Gastrocnemius medialis (tissue), 4 donors: ENCODE measurements at regions of chr4 and their contacts with region 1.

Region 1: GRCh38 chr4:70839589-70840093 is at the start of gene GRSF1:
- DNase-seq: peak; percentile 94
- ATAC-seq: peak; percentile 89 to 91
- H3K4me3 ChIP-seq: peak within 1 kb of the TSS; percentile 68 to 96 (median 78)
- H3K27ac ChIP-seq: peak within 1 kb of the TSS; percentile 86 to 98 (median 92)
- H3K4me1 ChIP-seq: peaks cover 23 to 29% of the 10 kb centered on the region in 2 donors
- H3K27me3 ChIP-seq: no peaks in the 10 kb centered on the region
- CTCF ChIP-seq: peak in 2 of 5 experiments; percentile 8 to 11
- POLR2A ChIP-seq: peak; percentile 71 to 84
- total RNA-seq, gene GRSF1: 121 to 158 (median 140) TPM

Region 2: DNA sequence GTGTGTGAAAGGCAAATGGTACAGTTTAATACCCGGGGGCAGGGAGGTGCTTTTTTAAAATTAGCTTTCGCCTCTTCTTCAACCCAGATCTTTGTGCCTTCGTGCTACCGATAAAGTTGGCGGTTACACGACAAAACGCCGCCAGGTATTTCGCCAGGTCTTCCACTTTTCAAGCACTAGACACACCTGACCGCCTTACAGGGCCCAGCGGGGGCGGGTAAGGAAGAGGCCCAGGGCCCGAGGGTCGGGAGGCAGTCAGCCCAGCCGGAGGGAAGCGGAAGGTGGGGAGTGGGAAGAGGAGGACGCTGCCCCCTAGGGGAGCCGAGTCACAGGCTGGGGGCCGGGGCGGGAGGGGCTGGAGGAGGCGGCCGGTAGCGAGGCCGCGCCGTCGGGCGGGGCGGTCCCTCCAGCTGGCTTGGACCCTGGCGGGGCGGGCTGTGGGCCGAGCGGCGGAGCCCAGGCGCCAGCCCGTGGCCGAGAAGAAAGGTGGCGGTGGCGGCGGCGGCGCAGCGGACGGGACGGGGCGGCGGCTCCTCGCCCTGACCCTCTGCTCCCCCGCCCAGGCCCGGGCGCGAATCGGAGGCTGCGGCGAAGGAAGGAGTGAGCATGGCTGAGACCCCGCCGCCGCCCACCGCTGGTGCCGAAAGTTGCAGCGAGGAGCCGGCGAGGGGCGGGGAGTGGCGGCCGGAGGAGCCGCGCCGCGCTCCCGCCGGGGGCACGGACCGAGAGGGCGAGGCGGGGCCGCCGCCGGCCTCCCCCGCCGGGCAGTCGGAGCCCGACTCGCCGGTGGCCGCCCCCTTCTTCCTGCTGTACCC is 135.1 kb before region 1 on chr4:
- in situ Hi-C with region 1: no loop called
- intact Hi-C with region 1: loop called (anchors 5 kb)
- DNase-seq: peak; percentile 65 to 80
- ATAC-seq: peak; percentile 67 to 72
- H3K4me3 ChIP-seq: peak overlapping the region; percentile 72 to 94 (median 80)
- H3K27ac ChIP-seq: peak overlapping the region; percentile 93 to 98 (median 96)
- H3K4me1 ChIP-seq: peaks cover 16 to 24% of the 10 kb centered on the region in 2 donors
- H3K27me3 ChIP-seq: no peaks in the 10 kb centered on the region
- CTCF ChIP-seq: peak in 2 of 5 experiments; percentile 45 to 48
- POLR2A ChIP-seq: peak in 1 of 2 donors; percentile 48

Region 3: DNA sequence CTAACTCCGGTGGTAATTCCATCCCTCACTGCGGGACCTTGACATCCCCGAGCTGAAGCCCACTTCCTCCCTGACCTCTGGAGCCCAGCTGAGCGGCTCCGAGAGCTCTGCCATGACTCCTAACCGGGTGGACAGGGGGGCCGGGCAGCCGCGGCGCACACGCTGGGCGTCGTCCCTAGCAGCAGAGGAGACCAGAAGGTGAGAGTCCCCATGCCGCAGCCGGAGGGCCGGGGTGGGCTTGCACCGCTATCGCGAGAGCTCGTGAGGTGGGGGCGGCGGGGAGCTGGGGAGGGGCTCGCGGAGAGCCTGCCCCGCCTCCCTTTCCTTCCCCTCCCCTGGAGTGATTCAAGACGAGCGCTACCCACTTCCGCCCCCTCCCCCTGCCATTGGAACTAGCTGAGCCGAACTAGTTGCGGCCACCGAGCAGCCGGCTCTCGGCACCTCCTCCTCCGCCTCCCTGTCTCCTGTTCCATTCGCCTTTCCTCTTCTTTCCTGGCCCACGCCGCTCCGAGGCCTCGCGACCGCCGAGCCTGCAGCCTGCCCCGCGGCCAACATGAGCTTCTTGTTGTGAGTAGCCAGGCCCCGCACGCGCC is 62.4 kb after region 1 on chr4 and contains the start of gene MOB1B:
- in situ Hi-C with region 1: no loop called
- intact Hi-C with region 1: loop called (anchors 1 kb)
- DNase-seq: peak; percentile 74 to 77
- ATAC-seq: peak; percentile 96
- H3K4me3 ChIP-seq: peak within 1 kb of the TSS; percentile 73 to 96 (median 91)
- H3K27ac ChIP-seq: peak within 1 kb of the TSS; percentile 79 to 90 (median 87)
- H3K4me1 ChIP-seq: peaks cover 5 to 10% of the 10 kb centered on the region in 2 donors
- H3K27me3 ChIP-seq: no peaks in the 10 kb centered on the region
- CTCF ChIP-seq: peak in 4 of 5 experiments; percentile 15 to 58 (median 34)
- POLR2A ChIP-seq: peak; percentile 26 to 47
- total RNA-seq, gene MOB1B: 6.5 to 17.5 (median 8.4) TPM

Region 4: GRCh38 chr4:70915036-70915815 is 75.6 kb after region 1 on chr4:
- in situ Hi-C with region 1: no loop called
- intact Hi-C with region 1: no loop called
- DNase-seq: no peak
- ATAC-seq: no peak
- H3K4me3 ChIP-seq: no peak overlapping the region
- H3K27ac ChIP-seq: no peak overlapping the region
- H3K4me1 ChIP-seq: no peaks in the 10 kb centered on the region
- H3K27me3 ChIP-seq: no peaks in the 10 kb centered on the region
- CTCF ChIP-seq: no peak
- POLR2A ChIP-seq: no peak

Region 5: DNA sequence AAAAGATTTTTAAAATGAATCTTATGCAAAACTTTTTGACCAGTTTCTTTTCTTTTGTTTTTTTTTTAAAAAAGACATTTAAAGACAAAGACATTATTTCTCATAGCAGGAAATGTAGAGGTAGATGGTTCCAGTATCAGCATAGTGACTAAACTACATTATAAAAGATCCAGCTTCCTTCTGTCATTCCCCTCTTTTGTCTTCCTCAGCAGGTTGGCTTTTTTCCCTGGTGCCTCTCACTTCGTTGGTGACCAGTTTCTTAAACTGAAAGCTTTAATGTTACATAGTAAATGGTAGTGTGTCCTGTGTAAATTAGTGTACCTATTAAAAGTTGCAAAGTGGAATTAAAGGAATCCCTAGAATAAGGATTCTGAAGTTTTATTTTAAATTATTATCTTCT is 189.9 kb after region 1 on chr4:
- in situ Hi-C with region 1: no loop called
- intact Hi-C with region 1: no loop called
- DNase-seq: no peak
- ATAC-seq: no peak
- H3K4me3 ChIP-seq: no peak overlapping the region
- H3K27ac ChIP-seq: no peak overlapping the region
- H3K4me1 ChIP-seq: peaks cover 4 to 10% of the 10 kb centered on the region in 2 donors
- H3K27me3 ChIP-seq: no peaks in the 10 kb centered on the region
- CTCF ChIP-seq: no peak
- POLR2A ChIP-seq: no peak